Thyroid gland (tissue), 4 donors: ENCODE measurements at regions of chr2 and their contacts with region 1.

Region 1: GRCh38 chr2:47386551-47386950 is 16.4 kb upstream of the MSH2 start:
- DNase-seq: no peak
- H3K4me3 ChIP-seq: no peak overlapping the region
- H3K27ac ChIP-seq: no peak overlapping the region
- H3K4me1 ChIP-seq: no peaks in the 10 kb centered on the region
- H3K27me3 ChIP-seq: no peaks in the 10 kb centered on the region
- CTCF ChIP-seq: no peak
- POLR2A ChIP-seq: no peak

Region 2: DNA sequence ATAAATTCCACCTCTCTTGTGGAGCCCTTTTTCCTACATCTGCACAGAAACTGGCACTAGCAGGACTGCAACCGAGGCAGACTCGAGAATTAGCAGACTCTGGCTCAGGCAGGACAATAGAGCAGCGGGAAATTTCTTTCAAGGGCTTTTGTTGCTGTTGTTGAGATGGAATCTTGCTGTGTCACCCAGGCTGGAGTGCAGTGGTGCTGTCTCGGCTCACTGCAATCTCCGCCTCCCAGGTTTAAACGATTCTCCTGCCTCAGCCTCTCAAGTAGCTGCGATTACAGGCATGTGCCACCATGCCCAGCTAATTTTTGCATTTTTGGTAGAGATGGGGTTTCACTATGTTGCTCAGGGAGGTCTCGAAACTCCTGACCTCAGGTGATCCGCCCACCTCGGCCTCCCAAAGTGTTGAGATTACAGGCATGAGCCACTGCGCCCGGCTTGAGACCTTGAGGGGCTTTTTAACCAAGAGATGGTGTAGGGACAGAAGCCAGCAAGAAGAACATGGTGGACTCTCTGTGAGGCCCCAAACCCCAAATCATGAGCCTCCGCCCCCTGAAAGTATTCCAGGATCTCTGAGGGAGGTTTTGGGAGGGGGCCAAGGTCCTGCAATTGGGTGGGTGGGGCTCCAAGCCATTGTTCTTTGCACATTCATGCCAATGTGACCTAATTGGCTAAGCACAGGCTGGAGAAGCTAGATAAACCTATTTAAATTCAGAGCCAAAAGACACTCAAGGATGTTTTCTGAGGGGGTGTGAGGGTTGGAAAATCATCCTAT is 52.0 kb before region 1 on chr2:
- intact Hi-C with region 1: loop called (anchors 5 kb)
- DNase-seq: peak; percentile 69 to 70
- H3K4me3 ChIP-seq: no peak overlapping the region
- H3K27ac ChIP-seq: peak overlapping the region in 2 of 3 donors; percentile 9 to 24
- H3K4me1 ChIP-seq: peaks cover 13 to 26% of the 10 kb centered on the region in 2 donors
- H3K27me3 ChIP-seq: no peaks in the 10 kb centered on the region
- CTCF ChIP-seq: no peak
- POLR2A ChIP-seq: no peak